Head of caudate nucleus (tissue), 42 donors: ENCODE measurements at regions of chr9 and their contacts with region 1.

Region 1: DNA sequence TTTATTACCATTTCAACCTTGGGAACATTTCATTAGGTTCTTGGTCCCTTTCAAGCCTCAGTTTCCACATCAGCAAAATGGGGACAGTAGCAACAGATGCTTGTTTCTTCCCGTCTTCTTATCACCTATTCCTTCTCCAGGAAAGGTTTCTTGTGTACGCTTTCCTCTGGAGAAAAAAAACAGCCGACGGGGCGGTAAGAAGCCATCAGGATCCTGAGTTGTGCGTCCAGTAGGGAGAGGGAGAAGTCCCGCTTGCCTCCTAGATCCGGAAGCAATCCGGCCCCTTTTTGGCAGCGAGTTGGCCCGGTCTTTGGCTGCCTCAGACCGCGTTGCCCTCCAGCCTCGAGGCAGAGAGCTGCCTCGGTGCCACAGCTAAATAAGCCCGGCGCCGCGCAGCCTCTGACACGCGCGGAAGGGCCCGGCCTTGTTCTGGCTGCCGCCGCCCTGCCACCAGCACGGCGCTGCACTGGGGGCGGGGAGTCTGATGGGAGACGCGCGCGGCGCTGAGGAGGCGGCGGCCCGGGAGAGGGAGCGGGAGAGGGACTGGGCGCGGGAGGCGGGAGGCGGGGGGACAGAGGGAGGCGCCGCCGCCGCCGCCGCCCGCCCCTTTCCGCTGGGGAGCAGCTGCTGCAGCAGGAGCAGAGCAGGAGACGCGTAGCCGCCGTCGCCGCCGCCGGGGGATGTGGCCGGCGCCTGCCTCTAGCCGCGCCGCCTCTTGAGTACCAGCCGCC is at the start of gene SLC44A1:
- DNase-seq: peak; percentile 93 to 100 (median 99)

Region 2: DNA sequence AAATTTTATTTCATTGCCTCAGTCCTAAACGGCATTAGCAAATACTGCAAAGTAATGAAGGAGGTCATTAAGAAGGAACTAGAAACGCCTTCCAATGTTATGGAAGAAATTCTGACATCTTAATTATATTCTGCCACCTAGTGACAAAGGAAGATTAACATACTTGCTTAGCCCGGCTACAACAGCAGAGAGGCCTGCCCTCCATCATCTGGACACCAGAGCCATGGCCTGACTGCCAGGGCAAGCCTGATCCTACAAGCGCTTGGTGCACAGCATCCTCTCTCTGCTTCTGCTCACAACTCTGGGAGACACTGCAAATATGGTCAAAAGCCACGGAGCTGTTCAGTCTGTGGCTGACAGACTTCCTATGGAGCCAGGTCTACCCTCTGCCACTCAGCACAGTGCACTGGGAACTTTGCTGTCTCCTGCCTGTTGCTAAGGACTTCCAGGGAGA is 87.0 kb before region 1 on chr9:
- intact Hi-C with region 1: loop called (anchors 10 kb)
- DNase-seq: peak; percentile 33 to 81 (median 62)

Region 3: DNA sequence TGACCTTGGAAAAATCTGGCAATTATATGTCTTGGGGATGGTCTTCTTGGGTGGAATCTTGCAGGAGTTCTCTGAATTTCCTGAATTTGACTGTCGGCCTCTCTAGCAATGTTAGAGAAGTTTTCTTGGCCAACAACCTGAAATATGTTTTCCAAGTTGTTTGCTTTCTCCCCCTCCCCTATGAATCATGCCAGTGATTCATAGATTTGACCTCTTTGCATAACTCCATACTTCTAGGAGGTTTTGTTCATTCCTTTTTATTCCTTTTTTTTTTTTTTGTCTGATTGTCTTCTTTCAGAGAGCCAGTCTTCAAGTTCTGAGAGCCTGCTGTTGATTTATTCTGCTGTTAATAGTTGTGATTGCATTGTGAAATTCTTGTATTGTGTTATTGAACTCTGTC is 56.4 kb before region 1 on chr9:
- intact Hi-C with region 1: no loop called
- DNase-seq: no peak

Region 4: GRCh38 chr9:105299190-105299854 is 55.2 kb after region 1 on chr9:
- intact Hi-C with region 1: loop called (anchors 5 kb)
- DNase-seq: peak in 13 of 42 donors; percentile 20 to 79 (median 39)

Region 5: DNA sequence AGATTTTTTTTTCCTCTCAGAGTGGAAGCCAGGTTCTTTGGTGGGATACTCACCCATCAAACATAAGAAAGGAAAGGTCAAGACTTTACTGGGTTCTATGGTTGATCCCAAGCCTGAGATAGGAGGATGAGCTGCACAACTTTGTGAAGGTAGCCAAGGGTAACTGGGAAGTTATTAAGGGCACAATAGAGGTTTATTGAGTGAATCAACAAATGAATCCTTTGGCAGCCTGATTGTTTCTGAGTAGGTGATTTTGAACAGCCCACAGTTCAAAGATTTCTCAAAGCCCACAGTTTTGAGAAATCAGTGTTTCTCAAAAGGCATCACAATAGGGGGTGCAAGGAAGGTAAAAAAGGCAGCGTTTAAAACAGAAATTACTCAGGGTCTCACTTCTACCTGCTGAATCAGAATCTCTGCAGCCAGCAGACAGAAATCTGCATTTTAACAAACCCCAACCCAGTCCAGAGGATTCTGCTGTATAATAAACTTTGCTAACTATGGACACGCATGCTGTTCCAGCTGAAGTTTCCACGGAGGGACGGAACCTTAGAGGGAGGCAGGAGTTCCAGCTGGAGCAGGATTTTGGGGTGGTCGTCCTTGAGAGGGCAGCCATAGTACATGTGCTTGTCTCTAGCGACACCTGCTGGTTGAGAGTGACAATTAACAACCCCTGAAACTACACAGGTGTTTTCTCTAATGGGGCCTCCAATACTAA is 170.9 kb after region 1 on chr9:
- intact Hi-C with region 1: loop called (anchors 10 kb)
- DNase-seq: peak in 38 of 42 donors; percentile 26 to 90 (median 72)